GM13977 (cell line): ENCODE measurements at regions of chr1 and their contacts with region 1.

Region 1: DNA sequence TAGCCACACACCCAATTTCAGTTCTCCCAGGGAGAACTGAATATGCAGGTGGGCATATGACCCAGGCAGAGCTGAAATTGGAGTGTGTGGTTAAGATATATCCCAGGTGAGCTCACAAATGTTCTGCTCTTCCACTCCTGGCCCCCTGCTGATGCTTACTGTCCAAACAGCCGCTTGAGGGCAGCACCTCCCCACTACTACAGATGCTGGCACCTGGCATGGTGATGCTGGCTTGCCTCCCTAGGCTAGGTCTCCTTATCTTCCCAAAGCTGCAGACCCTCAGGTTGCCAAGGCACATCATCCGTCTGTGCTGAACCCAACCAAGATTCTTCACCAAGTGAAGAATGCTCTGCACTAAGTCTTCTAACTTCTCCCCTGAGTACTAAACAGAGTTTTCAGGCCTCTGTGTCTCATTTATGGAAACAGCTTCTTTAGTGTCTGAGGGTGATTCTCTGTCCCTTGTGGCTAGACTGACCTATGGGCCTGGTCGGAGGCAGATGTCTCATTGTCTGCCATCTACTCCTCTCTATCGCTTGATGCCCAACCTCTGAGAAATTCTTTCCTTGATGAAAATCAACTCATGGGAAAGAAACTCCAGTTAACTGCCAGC is 27.2 kb downstream of the XCL1 start:
- DNase-seq: peak; percentile 60
- CTCF ChIP-seq: peak; percentile 88

Region 2: DNA sequence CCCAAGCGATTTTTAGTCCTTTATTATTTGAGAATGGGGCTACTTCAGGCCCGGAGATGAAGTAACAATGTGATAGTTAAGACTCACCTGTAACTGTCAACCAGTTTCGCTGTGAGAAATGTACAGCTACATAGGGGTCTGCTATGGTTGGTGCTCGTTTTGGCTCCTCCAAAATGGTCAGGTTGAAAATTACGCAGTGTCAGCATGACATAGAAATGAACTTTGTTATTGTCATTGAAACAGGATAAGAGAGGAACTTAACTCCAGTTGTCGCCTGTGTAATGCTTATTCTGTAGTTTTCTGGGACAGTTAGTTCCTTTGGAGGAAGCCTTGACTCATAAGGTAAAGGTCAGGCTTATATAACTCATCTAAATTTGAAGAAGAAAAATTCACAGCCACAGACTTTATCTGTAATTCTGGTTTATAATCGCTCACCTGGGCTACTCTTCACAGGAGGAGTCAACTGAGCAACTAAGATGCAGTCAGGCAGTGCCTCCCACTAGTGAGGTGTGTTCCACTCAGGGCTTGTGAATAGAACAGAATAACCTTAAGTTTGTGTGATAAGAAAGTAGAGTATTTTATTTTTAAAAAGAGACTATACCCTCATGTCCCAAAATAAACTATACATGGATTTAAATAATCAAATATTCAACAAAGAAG is 1216.2 kb before region 1 on chr1:
- in situ Hi-C with region 1: no loop called
- DNase-seq: no peak
- CTCF ChIP-seq: no peak

Region 3: GRCh38 chr1:168535536-168535935 is 68.1 kb before region 1 on chr1:
- in situ Hi-C with region 1: no loop called
- DNase-seq: peak; percentile 11
- CTCF ChIP-seq: no peak

Region 4: DNA sequence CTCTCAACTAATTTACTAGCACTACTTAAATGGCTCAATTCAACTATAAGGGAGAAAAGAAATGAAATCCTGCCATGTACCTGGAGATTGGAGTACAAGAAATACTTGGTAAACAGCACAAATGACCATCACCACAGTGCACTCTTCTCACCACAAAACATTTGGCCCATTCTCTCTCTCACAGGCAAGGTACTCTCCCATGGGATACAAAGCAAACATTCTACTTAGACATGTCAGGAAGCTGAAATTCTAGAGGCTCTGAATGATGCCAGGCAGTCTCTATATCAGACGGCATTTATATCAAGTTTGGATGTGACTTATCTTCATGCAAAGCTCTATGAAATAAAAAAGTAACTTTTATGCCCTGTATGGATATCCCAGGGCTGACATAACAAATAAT is 52.9 kb after region 1 on chr1:
- in situ Hi-C with region 1: no loop called
- DNase-seq: no peak
- CTCF ChIP-seq: no peak

Region 5: DNA sequence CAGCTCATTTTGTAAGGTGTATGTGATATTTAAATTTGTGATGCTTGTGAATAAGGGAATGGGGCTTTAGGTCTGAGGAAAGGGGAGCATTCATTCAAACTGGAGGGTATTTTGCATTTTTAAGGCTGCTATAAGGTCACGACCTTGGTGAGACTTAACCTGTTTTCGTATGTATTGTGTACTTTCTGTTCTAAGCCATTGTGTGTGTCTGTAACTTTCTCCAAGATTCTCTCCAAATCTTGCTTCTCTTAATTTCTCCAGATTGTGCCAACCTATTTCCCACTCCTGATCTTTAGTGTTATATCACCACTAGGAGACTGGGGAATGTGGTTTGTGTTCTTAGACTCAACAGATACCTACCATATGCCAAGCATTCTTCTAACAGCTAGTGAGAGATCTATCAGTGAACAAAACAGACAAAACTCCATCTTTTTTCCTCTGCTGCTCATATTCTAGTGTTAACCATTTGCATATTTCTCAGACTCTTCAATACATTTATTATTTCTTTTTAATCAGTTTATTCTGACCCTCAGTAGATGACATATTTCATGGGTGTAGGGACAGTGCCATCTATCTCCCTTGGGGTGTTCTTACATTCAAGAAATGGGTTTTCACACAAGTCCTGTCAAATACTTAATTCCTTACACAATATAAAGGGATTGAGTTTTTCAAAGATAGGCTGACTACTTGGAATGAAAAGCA is 530.3 kb after region 1 on chr1:
- in situ Hi-C with region 1: no loop called
- DNase-seq: no peak
- CTCF ChIP-seq: peak; percentile 35

Region 6: DNA sequence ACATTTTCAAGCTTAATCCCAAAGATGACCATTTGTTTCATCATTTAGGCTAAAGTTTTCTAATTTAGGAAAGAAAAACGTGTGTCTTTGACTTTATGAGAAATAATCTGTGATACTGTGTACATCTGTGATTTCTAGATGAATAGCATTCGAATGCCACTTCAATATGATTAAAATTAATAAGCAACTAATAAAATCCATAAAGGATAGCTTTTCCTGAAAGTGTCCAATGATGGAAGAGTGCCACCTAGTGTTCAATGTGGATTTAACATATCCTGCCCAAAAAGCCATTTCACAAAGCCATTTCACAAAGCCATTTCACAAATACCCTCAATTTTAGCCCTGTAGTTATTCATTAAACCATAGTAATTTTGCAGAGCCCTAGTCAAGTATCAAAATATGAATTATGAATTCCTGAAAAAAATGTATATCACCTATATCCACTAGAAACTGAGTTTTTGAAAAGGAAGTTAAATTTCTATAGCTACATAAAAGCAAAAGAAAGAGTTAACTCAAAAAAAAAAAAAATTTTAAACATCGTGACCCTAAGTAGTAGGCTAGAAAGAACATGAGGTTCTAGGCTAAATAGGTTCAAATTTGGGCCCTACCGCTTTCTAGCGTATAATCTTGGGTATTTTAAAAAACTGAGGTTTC is 744.9 kb after region 1 on chr1:
- in situ Hi-C with region 1: loop called (anchors 10 kb)
- DNase-seq: peak; percentile 34
- CTCF ChIP-seq: peak; percentile 66

Region 7: DNA sequence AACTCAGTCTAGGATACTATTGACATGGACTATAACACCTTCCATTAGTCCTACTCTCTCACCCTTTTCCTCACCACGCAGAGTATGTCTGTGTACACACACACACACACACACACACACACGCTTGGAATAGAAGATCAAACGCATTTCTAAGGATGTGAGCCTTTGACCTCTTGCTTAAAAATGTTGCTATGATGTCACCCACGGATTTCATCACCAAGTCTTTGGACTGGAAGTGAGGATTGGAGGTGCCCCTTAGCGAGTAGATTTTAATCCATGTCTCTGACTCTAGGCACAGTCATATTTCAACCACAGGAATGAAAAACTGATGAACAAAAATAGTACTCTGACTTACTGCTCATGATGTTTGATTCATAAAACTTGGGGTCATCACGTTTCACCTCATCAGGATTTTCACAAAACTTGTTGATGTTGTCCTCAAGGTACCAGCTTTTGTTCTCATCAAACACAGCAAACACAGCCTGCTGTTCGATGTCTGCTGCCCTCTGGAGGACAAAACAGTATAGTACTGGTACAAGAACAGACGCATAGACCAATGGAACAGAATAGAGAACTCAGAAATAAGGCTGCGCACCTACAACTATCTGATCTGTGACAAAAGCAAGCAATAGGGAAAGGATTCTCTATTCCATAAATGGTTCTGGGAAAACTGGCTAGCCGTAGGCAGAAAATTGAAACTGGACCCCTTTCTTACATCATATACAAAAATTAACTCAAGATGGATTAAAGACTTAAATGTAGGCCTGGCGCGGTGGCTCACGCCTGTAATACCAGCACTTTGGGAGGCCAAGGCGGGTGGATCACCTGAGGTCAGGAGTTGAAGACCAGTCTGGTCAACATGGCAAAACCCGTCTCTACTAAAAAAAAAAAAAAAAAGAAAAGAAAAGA is 942.7 kb after region 1 on chr1:
- in situ Hi-C with region 1: loop called (anchors 25 kb)
- DNase-seq: peak; percentile 11
- CTCF ChIP-seq: peak; percentile 78